Sciatic nerve (tissue), 2 donors: ENCODE measurements at regions of chr9 and their contacts with region 1.

Region 1: GRCh38 chr9:134681061-134681661 is 39.6 kb downstream of the COL5A1 start:
- DNase-seq: no peak
- ATAC-seq: peak; percentile 72

Region 2: GRCh38 chr9:134236001-134236421 is 445.1 kb before region 1 on chr9:
- intact Hi-C with region 1: loop called (anchors 5 kb)
- DNase-seq: no peak
- ATAC-seq: peak; percentile 80

Region 3: DNA sequence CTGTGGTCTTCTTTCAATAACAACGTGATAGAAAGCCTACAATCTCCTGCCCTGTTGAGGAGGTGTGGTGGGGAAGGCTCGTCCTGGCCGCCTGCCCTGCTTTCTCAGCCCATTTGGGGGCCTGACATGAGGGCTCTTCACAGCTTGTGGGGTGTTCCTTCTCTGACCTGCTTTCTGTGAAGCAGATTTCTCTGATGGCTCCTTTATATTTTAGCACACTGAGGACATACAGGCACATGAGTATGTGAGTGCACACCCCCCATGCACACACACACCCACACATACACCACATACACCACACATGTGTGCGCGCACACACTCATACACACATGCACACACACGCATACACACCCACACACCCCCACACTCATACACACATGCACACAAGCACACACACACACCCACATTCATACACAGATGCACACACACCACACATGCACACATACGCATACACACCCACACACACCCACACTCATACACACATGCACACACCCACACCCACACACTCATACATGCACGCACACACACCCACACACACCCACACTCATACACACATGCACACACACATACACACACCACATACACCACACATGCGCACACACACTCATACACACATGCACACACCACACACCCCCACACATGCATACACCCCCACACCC is 77.9 kb after region 1 on chr9:
- intact Hi-C with region 1: no loop called
- DNase-seq: no peak
- ATAC-seq: no peak

Region 4: DNA sequence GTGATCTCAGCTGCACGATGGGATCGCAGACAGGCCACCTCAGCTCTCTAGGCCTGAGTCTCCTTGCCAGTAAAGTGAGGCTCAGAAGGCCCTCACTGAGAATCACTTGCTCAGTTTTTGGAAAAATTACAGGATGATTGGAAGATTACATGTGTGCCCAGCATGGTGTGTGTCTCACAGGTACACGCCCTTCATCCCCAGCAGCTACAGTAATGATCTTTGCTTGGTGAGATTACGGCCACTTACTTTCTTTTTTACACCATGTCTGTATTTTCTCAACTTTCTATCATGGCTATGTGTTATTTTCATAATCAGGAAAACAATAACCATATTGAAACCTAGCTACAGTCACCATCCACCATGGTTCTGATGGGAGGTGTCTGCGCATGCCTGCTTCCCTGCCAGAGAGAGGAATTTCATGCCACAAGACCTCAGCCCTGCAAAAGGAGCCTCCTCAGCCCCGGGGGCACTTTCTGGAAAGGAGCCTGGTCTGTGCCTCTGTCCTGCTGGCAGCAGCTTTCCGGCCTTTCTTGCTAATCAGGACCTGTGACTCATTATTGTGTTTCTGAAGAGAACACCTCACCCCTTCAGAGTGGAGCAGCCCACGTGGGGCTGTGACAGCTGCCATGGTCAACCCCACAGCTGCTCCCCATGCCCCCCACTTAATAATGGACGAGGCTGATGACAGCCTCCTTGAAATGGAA is 342.1 kb after region 1 on chr9:
- intact Hi-C with region 1: no loop called
- DNase-seq: no peak
- ATAC-seq: no peak

Region 5: GRCh38 chr9:135037521-135038250 is 356.5 kb after region 1 on chr9:
- intact Hi-C with region 1: no loop called
- DNase-seq: peak; percentile 30
- ATAC-seq: no peak